Common myeloid progenitor, CD34-positive (primary cell): ENCODE measurements at regions of chr3 and their contacts with region 1.

Region 1: GRCh38 chr3:58414538-58415197 is 19.0 kb downstream of the PDHB start:
- DNase-seq: peak; percentile 70 to 89 (median 85)
- H3K4me3 ChIP-seq: no peak overlapping the region
- H3K27ac ChIP-seq: peak overlapping the region in 1 of 2 experiments; percentile 37
- H3K4me1 ChIP-seq: peaks cover 0 to 9% (median 4%) of the 10 kb centered on the region in 4 experiments
- H3K27me3 ChIP-seq: no peaks in the 10 kb centered on the region

Region 2: GRCh38 chr3:58116161-58116955 is 298.3 kb before region 1 on chr3:
- CTCF ChIA-PET with region 1: no interaction called
- POLR2A ChIA-PET with region 1: no interaction called
- DNase-seq: peak; percentile 13 to 50 (median 21)
- H3K4me3 ChIP-seq: no peak overlapping the region
- H3K27ac ChIP-seq: no peak overlapping the region
- H3K4me1 ChIP-seq: peaks cover 5 to 17% (median 10%) of the 10 kb centered on the region in 4 experiments
- H3K27me3 ChIP-seq: no peaks in the 10 kb centered on the region

Region 3: DNA sequence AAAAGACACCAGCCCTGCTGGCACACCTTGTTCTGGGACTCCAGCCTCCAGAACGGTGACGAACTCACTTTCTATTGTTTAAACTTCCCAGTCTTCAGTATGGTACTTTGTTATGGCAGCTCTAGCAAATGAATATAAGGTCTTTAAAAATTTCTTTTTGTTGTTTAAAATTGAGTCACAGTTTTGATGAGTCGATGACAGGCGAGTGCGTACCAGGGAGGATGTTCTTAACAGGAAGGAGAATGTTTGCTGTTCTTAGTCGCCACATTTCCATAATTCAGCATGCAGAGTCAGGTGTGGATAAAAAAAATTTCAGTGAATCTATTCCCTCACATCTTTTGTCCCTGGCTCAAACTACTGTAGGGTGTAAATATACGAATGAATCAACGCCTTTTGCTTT is 216.3 kb before region 1 on chr3:
- CTCF ChIA-PET with region 1: no interaction called
- POLR2A ChIA-PET with region 1: no interaction called
- DNase-seq: no peak
- H3K4me3 ChIP-seq: no peak overlapping the region
- H3K27ac ChIP-seq: no peak overlapping the region
- H3K4me1 ChIP-seq: peaks cover 0 to 19% (median 9%) of the 10 kb centered on the region in 4 experiments
- H3K27me3 ChIP-seq: no peaks in the 10 kb centered on the region

Region 4: GRCh38 chr3:58324391-58325390 is 90.0 kb before region 1 on chr3:
- CTCF ChIA-PET with region 1: interaction called, 72 read pairs
- POLR2A ChIA-PET with region 1: no interaction called
- DNase-seq: no peak
- H3K4me3 ChIP-seq: no peak overlapping the region
- H3K27ac ChIP-seq: no peak overlapping the region
- H3K4me1 ChIP-seq: peaks cover 0 to 5% (median under 1%) of the 10 kb centered on the region in 4 experiments
- H3K27me3 ChIP-seq: no peaks in the 10 kb centered on the region

Region 5: DNA sequence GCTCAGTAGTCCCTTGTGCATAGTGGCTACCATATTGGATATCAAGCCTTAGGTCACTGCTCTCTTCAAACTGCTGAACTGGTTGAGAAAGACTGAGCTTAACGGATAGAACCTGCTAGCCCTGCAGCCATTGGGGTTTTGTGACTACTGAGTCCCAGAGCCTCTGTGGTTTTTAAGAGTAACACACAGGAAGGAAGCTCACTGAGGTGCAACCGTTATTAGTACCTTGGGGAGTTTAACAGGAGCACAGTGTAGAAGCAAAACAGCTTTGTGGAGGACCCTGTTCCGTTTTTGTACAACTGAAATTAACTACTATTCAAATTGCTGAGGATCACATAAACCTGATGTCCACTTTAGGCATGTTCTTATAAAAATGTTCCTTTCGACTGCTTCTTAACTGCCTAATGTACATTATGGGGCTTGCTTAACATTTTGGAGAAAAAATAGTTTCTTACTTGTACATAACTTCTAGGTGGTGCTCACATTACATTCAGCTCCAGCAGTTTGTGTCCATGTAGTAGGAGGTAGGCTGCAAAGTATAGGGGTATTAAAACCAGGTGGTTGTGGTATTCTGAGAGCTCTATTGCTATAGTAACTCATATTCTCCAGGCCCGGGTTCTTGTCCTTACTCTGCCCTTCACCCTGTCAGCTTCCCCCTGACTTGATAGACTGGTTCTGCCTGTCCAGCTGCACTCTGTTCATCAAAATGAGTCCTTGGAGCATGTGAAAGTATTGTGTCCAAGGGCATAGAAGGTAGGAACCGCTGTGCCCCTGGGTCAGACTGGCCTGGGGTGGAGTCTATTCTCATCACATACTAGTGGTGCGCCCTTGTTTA is 64.7 kb before region 1 on chr3:
- CTCF ChIA-PET with region 1: interaction called, 10 read pairs
- POLR2A ChIA-PET with region 1: interaction called, 6 read pairs
- DNase-seq: peak in 1 of 3 donors; percentile 29
- H3K4me3 ChIP-seq: peak overlapping the region in 2 of 7 experiments; percentile 5 to 33
- H3K27ac ChIP-seq: peak overlapping the region in 1 of 2 experiments; percentile 25
- H3K4me1 ChIP-seq: peaks cover 24 to 71% (median 50%) of the 10 kb centered on the region in 4 experiments
- H3K27me3 ChIP-seq: no peaks in the 10 kb centered on the region

Region 6: GRCh38 chr3:58404396-58404795 is 10.3 kb before region 1 on chr3:
- CTCF ChIA-PET with region 1: interaction called, 28 read pairs
- POLR2A ChIA-PET with region 1: no interaction called
- DNase-seq: no peak
- H3K4me3 ChIP-seq: no peak overlapping the region
- H3K27ac ChIP-seq: no peak overlapping the region
- H3K4me1 ChIP-seq: no peaks in the 10 kb centered on the region
- H3K27me3 ChIP-seq: no peaks in the 10 kb centered on the region

Region 7: GRCh38 chr3:58452176-58452575 is 37.5 kb after region 1 on chr3:
- CTCF ChIA-PET with region 1: no interaction called
- POLR2A ChIA-PET with region 1: no interaction called
- DNase-seq: no peak
- H3K4me3 ChIP-seq: no peak overlapping the region
- H3K27ac ChIP-seq: no peak overlapping the region
- H3K4me1 ChIP-seq: no peaks in the 10 kb centered on the region
- H3K27me3 ChIP-seq: no peaks in the 10 kb centered on the region

Region 8: DNA sequence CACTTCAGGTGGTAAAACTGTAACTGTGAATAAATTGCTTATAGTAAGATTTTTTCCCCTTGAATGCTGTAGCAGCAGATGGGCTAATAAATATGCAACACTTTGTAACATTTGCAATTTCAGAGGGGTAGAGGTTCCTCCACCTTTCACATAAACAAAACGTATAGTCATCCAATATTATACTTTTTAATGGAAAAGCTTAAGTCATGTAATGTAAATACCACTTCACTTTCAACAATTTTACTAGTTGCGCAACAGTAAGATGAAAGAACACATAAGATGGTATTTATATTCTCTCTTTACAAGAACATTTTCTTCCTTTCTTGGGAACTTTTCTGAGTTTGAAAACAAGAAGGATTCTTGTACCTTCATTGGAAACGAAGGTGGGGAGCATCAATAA is 308.5 kb after region 1 on chr3:
- CTCF ChIA-PET with region 1: no interaction called
- POLR2A ChIA-PET with region 1: no interaction called
- DNase-seq: no peak
- H3K4me3 ChIP-seq: no peak overlapping the region
- H3K27ac ChIP-seq: no peak overlapping the region
- H3K4me1 ChIP-seq: no peaks in the 10 kb centered on the region
- H3K27me3 ChIP-seq: no peaks in the 10 kb centered on the region